ENCODE measurements at regions of chr15 and their contacts with region 1.

Region 1: DNA sequence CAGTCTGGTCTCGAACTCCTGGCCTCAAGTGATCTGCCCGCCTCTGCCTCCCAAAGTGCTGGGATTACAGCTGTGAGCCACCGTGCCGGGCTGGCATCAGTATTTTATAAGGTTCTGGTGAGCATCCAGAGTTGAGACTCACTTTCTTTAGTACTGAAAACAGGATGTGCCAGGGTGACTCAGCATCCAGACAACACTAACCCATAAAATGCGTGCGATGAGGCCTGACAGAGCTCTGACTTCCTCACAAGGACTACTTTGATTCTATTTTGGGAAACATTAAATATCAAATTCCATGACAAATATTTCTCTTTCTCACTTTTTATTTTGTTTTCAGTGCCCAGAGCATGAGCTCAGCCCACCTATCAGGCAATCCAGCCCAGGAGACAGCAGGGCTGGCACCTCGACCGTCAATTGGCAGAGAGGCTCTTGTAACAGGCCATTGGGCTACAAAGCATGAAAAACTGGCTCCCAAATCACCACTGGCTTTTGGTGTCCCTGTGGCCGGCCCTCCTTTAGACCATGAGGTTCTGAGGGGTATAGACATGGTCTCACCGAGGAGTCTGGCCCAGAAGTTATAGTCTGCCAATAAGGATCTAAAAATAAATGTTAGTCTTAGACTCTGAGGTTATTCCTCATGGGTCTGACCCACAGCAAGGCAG is 75.0 kb downstream of the FEM1B start:
- DNase-seq: peak; percentile 97
- ATAC-seq: peak; percentile 91
- H3K4me3 ChIP-seq: no peak overlapping the region
- H3K27ac ChIP-seq: peak overlapping the region; percentile 98
- H3K4me1 ChIP-seq: peaks cover 32% of the 10 kb centered on the region
- H3K27me3 ChIP-seq: no peaks in the 10 kb centered on the region
- CTCF ChIP-seq: no peak

Region 2: DNA sequence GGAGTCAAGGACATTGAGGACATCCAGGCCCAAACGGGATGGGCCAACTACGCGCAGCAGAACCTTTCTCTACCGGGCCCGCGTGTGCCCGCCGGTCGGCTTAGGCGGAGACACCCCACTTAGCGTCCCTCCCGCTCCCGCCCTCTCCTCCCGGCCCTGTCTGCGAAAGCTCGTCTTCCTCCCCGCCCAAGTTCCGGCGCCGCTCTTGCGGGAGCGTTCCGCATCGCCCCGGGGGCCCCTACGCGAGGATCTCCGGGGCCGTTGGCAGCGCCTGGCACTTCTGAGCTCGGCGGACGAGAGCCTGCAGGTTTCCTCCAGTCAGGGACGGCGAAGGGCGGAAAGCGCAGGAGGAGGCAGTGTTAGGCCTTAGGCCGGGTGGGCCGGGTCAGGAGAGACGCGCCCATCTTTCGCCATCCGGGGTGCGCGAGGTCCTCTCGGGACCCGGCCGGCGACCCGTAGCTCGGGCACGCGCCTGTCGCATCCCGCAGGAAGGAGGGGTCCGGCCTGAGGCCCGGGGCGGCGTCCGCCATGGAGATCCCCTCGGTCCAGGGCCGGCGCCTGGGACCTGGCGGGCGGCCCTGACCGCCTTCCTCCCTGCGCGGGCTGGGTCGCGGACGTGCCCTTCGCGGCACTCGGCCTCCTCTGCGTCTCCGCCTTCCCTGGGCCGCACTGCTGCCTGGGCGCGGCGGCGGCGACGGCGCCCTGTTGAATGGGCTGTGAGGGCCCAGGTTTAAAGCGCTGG is 74.8 kb before region 1 on chr15 and contains the start of gene FEM1B:
- CTCF ChIA-PET with region 1: no interaction called
- POLR2A ChIA-PET with region 1: no interaction called
- intact Hi-C with region 1: loop called (anchors 2 kb)
- DNase-seq: peak; percentile 83
- ATAC-seq: peak; percentile 69
- H3K4me3 ChIP-seq: peak within 1 kb of the TSS; percentile 89
- H3K27ac ChIP-seq: peak within 1 kb of the TSS; percentile 95
- H3K4me1 ChIP-seq: peaks cover 64% of the 10 kb centered on the region
- H3K27me3 ChIP-seq: no peaks in the 10 kb centered on the region
- CTCF ChIP-seq: no peak
- total RNA-seq, gene FEM1B: 19.4 and 22.1 TPM in 2 replicates